Naive thymus-derived CD4-positive, alpha-beta T cell (primary cell): ENCODE measurements at regions of chr2 and their contacts with region 1.

Region 1: GRCh38 chr2:161077367-161078210 is 82.6 kb upstream of the TANK start:
- DNase-seq: peak; percentile 10 to 84 (median 73)
- ATAC-seq: peak; percentile 90
- H3K4me3 ChIP-seq: peak overlapping the region; percentile 5
- H3K4me3 Mint-ChIP-seq: peak overlapping the region; percentile 1 to 76 (median 62)
- H3K27ac ChIP-seq: peak overlapping the region; percentile 40
- H3K27ac Mint-ChIP-seq: peak overlapping the region; percentile 60 to 94 (median 88)
- H3K4me1 ChIP-seq: peaks cover 23 to 25% of the 10 kb centered on the region in 2 donors
- H3K4me1 Mint-ChIP-seq: peaks cover 24 to 60% (median 29%) of the 10 kb centered on the region in 7 donors
- H3K27me3 ChIP-seq: no peaks in the 10 kb centered on the region
- H3K27me3 Mint-ChIP-seq: no peaks in the 10 kb centered on the region

Region 2: GRCh38 chr2:160482673-160483072 is 594.9 kb before region 1 on chr2:
- CTCF ChIA-PET with region 1: no interaction called
- POLR2A ChIA-PET with region 1: no interaction called
- intact Hi-C with region 1: loop called in 1 of 2 experiments (anchors 5 kb)
- DNase-seq: peak in 7 of 9 donors; percentile 58 to 87 (median 78)
- ATAC-seq: peak; percentile 97
- H3K4me3 ChIP-seq: no peak overlapping the region
- H3K4me3 Mint-ChIP-seq: peak overlapping the region; percentile 45 to 81 (median 72)
- H3K27ac ChIP-seq: peak overlapping the region; percentile 70
- H3K27ac Mint-ChIP-seq: peak overlapping the region; percentile 73 to 97 (median 95)
- H3K4me1 ChIP-seq: peaks cover 18 to 66% of the 10 kb centered on the region in 2 donors
- H3K4me1 Mint-ChIP-seq: peaks cover 33 to 100% (median 85%) of the 10 kb centered on the region in 7 donors
- H3K27me3 ChIP-seq: no peaks in the 10 kb centered on the region
- H3K27me3 Mint-ChIP-seq: no peaks in the 10 kb centered on the region

Region 3: GRCh38 chr2:160940699-160941098 is 136.9 kb before region 1 on chr2:
- CTCF ChIA-PET with region 1: no interaction called
- POLR2A ChIA-PET with region 1: no interaction called
- intact Hi-C with region 1: no loop called
- DNase-seq: peak in 3 of 9 donors; percentile 5 to 19 (median 9)
- ATAC-seq: peak; percentile 59
- H3K4me3 ChIP-seq: no peak overlapping the region
- H3K4me3 Mint-ChIP-seq: peak overlapping the region in 3 of 10 donors; percentile 18 to 41 (median 21)
- H3K27ac ChIP-seq: no peak overlapping the region
- H3K27ac Mint-ChIP-seq: peak overlapping the region; percentile 15 to 88 (median 47)
- H3K4me1 ChIP-seq: peaks cover 0 to 6% of the 10 kb centered on the region in 2 donors
- H3K4me1 Mint-ChIP-seq: peaks cover 6 to 32% (median 27%) of the 10 kb centered on the region in 7 donors
- H3K27me3 ChIP-seq: no peaks in the 10 kb centered on the region
- H3K27me3 Mint-ChIP-seq: peaks cover 0 to 5% (median 0%) of the 10 kb centered on the region in 5 donors

Region 4: DNA sequence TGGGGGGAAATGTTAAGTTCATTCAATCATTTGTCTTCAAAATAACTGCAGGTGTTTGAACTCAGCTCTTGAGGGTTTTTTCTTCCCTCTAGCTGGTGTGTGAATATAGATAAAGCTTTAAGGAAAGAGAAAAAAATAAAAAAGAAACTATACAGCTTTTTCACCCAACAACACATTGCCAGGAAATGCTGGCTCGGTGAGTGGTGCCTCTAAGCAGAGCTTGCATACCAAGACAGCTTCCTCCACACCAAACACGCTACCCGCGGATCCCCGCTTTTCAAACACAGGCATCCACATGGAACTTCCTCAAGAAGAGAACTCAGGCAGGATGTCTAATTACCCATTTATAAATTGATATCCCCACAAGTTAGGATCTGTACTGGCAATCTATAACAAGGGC is 12.8 kb after region 1 on chr2:
- CTCF ChIA-PET with region 1: interaction called, 3 read pairs
- POLR2A ChIA-PET with region 1: no interaction called
- intact Hi-C with region 1: loop called in 1 of 2 experiments (anchors 1 kb)
- DNase-seq: peak in 6 of 9 donors; percentile 26 to 47 (median 39)
- ATAC-seq: peak; percentile 76
- H3K4me3 ChIP-seq: peak overlapping the region; percentile 20
- H3K4me3 Mint-ChIP-seq: peak overlapping the region in 9 of 10 donors; percentile 49 to 81 (median 71)
- H3K27ac ChIP-seq: no peak overlapping the region
- H3K27ac Mint-ChIP-seq: peak overlapping the region in 7 of 9 donors; percentile 11 to 91 (median 74)
- H3K4me1 ChIP-seq: peaks cover 5 to 11% of the 10 kb centered on the region in 2 donors
- H3K4me1 Mint-ChIP-seq: peaks cover 13 to 52% (median 19%) of the 10 kb centered on the region in 7 donors
- H3K27me3 ChIP-seq: no peaks in the 10 kb centered on the region
- H3K27me3 Mint-ChIP-seq: no peaks in the 10 kb centered on the region

Region 5: DNA sequence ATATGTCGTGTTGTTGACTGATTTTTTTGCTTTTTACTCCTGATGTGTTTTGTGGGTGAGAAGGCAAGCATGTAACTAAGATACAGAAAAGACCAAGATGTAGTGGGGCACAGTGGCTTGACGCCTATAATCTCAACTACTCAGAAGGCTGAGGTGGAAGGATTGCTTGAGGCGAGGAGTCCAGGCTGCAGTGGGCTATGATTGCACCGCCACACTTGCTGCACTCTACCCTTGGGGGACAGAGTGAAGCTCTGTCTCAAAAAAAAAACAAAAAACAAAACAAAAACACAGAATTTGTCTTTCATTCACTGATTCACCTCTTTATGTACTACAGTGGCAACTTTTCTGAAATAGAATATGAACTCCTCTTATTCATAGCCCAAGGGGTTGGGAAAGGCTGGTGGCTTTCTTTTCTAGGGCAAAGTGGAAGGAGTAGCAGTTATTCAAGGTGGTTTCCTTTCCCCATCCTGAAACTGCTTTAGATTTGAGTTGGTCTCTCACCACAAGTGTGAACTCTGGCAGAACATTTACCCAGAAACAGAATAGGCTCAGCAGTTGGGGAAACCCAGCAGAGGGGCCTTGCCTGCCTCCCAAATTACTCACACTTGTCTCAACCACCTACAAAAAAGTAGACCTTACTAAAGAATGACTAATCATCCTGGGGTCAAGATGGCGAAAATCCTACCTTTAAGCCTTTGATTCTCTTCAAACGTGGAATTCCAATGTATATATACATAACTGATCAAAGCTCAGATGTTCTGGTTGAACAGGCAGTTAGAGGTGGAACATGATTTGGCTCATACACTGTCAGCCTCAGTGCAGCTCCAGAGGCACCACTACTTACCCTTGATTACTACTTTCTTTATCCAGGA is 89.2 kb after region 1 on chr2:
- CTCF ChIA-PET with region 1: no interaction called
- POLR2A ChIA-PET with region 1: no interaction called
- intact Hi-C with region 1: loop called (anchors 1 to 2 kb)
- DNase-seq: peak in 1 of 9 donors; percentile 70
- ATAC-seq: peak; percentile 75
- H3K4me3 ChIP-seq: no peak overlapping the region
- H3K4me3 Mint-ChIP-seq: peak overlapping the region in 2 of 10 donors; percentile 20 to 64
- H3K27ac ChIP-seq: no peak overlapping the region
- H3K27ac Mint-ChIP-seq: peak overlapping the region in 5 of 9 donors; percentile 6 to 87 (median 21)
- H3K4me1 ChIP-seq: peaks cover 12 to 64% of the 10 kb centered on the region in 2 donors
- H3K4me1 Mint-ChIP-seq: peaks cover 48 to 90% (median 84%) of the 10 kb centered on the region in 7 donors
- H3K27me3 ChIP-seq: no peaks in the 10 kb centered on the region
- H3K27me3 Mint-ChIP-seq: no peaks in the 10 kb centered on the region

Region 6: GRCh38 chr2:161308178-161308955 is 230.8 kb after region 1 on chr2 and contains the start of gene PSMD14:
- CTCF ChIA-PET with region 1: no interaction called
- POLR2A ChIA-PET with region 1: no interaction called
- intact Hi-C with region 1: loop called in 1 of 2 experiments (anchors 5 kb)
- DNase-seq: peak; percentile 67 to 88 (median 85)
- ATAC-seq: peak; percentile 95
- H3K4me3 ChIP-seq: peak within 1 kb of the TSS; percentile 94
- H3K4me3 Mint-ChIP-seq: peak within 1 kb of the TSS; percentile 89 to 98 (median 95)
- H3K27ac ChIP-seq: peak within 1 kb of the TSS; percentile 77
- H3K27ac Mint-ChIP-seq: peak within 1 kb of the TSS; percentile 92 to 97 (median 95)
- H3K4me1 ChIP-seq: peaks cover 3 to 19% of the 10 kb centered on the region in 2 donors
- H3K4me1 Mint-ChIP-seq: peaks cover 24 to 65% (median 42%) of the 10 kb centered on the region in 7 donors
- H3K27me3 ChIP-seq: no peaks in the 10 kb centered on the region
- H3K27me3 Mint-ChIP-seq: peaks cover 0 to 9% (median 3%) of the 10 kb centered on the region in 5 donors
- total RNA-seq, gene PSMD14: 13.2 to 69.5 (median 23.2) TPM

Region 7: GRCh38 chr2:162013514-162014475 is 936.2 kb after region 1 on chr2:
- CTCF ChIA-PET with region 1: no interaction called
- POLR2A ChIA-PET with region 1: no interaction called
- intact Hi-C with region 1: loop called in 1 of 2 experiments (anchors 5 kb)
- DNase-seq: peak in 7 of 9 donors; percentile 30 to 71 (median 55)
- ATAC-seq: peak; percentile 36
- H3K4me3 ChIP-seq: peak overlapping the region; percentile 11
- H3K4me3 Mint-ChIP-seq: peak overlapping the region; percentile 52 to 86 (median 70)
- H3K27ac ChIP-seq: peak overlapping the region; percentile 95
- H3K27ac Mint-ChIP-seq: peak overlapping the region; percentile 94 to 99 (median 98)
- H3K4me1 ChIP-seq: peaks cover 47 to 72% of the 10 kb centered on the region in 2 donors
- H3K4me1 Mint-ChIP-seq: peaks cover 41 to 86% (median 81%) of the 10 kb centered on the region in 7 donors
- H3K27me3 ChIP-seq: no peaks in the 10 kb centered on the region
- H3K27me3 Mint-ChIP-seq: no peaks in the 10 kb centered on the region

Region 8: DNA sequence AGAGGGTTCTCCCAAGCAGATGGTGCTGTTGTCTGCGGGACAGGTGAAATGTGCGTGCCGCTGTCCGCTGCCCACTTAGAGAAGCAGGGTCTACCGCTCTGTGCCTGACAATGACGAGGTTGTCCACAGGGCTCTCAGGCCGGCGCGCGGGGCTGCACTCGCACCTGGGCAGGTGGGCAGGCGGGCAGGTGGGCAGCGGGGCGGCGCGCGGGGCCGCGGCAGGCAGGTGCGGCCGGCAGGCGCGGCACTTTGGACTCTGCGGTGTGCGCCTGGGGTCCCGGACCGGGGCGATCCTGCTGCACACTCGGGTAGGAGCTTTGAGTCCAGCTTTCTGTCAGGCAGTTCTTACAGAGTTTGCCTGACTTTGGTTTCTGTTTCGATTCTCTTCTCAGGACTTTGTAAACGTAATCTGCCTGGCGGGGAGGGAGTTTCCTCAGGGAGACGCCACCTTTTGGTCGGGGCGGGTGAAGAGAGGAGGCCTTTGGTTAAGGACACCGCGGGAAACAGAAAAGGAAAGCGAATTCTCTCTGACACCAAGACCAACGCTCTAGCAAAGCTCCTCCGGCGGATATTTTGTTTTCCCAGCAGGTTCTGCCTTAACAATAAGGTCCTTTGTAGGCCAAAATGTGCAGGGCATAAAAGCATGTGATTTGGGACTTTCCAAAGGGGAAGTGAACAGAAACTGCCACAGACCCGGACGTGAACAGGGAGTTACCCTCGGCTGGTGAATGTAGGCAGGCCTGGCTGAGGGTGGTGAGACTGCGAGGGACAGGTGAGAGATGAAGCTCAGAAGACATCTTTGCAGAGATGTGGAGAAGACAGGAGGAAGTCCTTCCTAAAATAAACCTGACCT is 1241.0 kb after region 1 on chr2 and contains the start of gene IFIH1:
- CTCF ChIA-PET with region 1: no interaction called
- POLR2A ChIA-PET with region 1: no interaction called
- intact Hi-C with region 1: loop called in 1 of 2 experiments (anchors 5 kb)
- DNase-seq: peak; percentile 60 to 86 (median 73)
- ATAC-seq: peak; percentile 93
- H3K4me3 ChIP-seq: peak within 1 kb of the TSS; percentile 93
- H3K4me3 Mint-ChIP-seq: peak within 1 kb of the TSS; percentile 89 to 100 (median 95)
- H3K27ac ChIP-seq: peak within 1 kb of the TSS; percentile 85
- H3K27ac Mint-ChIP-seq: peak within 1 kb of the TSS; percentile 97 to 100 (median 99)
- H3K4me1 ChIP-seq: peaks cover 22 to 40% of the 10 kb centered on the region in 2 donors
- H3K4me1 Mint-ChIP-seq: peaks cover 43 to 69% (median 62%) of the 10 kb centered on the region in 7 donors
- H3K27me3 ChIP-seq: no peaks in the 10 kb centered on the region
- H3K27me3 Mint-ChIP-seq: no peaks in the 10 kb centered on the region
- total RNA-seq, gene IFIH1: 20.6 to 77.9 (median 30.7) TPM